MCF 10A (cell line): ENCODE measurements at regions of chr17 and their contacts with region 1.

Region 1: DNA sequence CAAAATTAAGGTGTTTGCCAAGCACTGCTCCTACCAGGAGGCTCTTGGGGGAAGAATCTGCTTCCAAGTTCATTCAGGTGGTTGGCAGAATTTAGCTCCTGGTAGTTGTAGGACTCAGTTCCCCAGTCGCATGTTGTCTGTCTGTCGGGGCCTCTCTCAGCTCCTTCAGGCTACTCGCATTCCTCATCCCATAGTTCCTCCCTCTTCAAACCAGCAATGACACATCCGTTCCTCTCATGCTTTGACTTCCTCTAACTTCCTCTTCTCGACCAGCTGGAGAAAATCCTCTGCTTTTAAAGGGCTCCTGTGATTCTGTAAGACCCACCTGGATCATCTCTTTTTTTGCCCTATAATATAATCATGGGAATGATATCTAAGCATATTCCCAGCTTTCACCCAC is 108.1 kb downstream of the PMP22 start:
- DNase-seq: peak; percentile 10
- H3K4me3 Mint-ChIP-seq: no peak overlapping the region
- H3K27ac Mint-ChIP-seq: no peak overlapping the region
- H3K4me1 Mint-ChIP-seq: peaks cover 18% of the 10 kb centered on the region
- H3K27me3 Mint-ChIP-seq: no peaks in the 10 kb centered on the region
- CTCF ChIP-seq: no peak

Region 2: DNA sequence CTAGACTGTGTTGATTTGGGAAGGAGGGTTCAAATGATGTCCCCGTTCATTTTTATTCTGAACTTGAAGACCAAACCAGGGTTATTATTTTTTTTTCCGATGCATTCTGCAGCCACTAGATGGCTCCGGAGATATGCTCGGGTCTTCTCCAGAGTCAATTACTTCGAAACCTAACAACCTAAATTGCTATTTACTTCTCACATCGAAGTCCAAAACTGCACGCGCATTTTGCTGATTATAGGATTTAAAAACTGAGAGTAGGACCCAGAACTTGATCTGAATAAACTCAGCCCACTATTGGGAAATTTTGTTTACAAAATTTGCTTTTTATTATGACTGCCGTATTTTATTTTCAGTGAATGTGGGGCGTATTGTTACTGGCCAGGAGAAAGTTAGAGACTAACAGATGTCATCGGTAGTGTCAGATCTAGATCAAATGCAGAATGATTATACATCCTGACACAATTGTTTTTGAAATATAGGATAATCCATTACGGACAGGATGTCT is 1819.1 kb before region 1 on chr17:
- CTCF ChIA-PET with region 1: interaction called, 3 read pairs
- POLR2A ChIA-PET with region 1: no interaction called
- intact Hi-C with region 1: loop called (anchors 10 kb)
- DNase-seq: peak; percentile 77
- H3K4me3 Mint-ChIP-seq: peak overlapping the region; percentile 66
- H3K27ac Mint-ChIP-seq: peak overlapping the region; percentile 23
- H3K4me1 Mint-ChIP-seq: no peaks in the 10 kb centered on the region
- H3K27me3 Mint-ChIP-seq: no peaks in the 10 kb centered on the region
- CTCF ChIP-seq: peak; percentile 79

Region 3: DNA sequence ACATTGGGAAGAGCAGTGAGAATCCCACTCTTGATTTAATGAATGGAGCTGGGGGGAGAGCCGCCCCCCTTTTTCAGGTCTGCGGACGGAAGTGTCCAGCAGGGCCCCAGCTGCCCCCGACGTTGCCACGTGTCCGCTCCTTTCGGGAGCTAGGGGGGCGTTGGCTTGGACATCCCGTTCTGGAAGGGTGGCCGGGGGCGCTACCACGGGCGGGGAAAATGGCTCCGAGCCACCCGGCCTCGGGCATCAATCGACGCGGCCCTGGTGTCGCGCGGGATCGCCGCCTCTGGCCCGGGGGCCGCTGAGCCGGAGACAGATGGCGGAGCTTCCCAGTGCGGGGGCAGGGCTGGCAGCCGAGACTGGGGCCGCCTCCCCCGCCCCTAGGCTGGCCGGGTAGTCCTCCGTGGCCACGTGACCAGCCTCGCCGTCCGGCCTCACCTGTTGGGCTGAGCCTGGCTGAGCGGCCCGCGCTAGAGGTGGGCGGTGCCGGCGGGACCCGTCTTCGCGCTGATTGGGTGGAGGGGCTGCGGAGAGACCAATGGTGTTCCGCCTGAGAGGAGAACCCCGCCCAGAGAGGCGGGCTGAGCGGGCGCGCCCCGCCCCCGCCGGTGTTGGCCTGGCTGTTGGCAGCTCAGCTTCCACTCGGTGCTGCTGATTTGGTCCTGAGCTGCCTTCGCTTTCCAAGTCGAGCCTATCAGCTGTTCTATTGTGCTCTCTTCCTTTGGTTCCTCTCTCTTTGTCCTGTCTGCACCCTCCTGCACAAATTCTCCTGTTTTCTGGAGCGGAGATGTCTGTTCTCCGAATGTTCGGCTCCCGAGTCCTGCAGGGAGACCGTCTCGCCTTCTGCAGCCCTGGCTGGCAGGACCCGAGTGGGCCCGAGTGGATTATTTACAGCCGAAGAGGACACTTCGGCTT is 847.8 kb before region 1 on chr17:
- CTCF ChIA-PET with region 1: interaction called, 4 read pairs
- POLR2A ChIA-PET with region 1: no interaction called
- intact Hi-C with region 1: loop called (anchors 5 kb)
- DNase-seq: peak; percentile 91
- H3K4me3 Mint-ChIP-seq: peak overlapping the region; percentile 72
- H3K27ac Mint-ChIP-seq: peak overlapping the region; percentile 61
- H3K4me1 Mint-ChIP-seq: peaks cover 23% of the 10 kb centered on the region
- H3K27me3 Mint-ChIP-seq: no peaks in the 10 kb centered on the region
- CTCF ChIP-seq: no peak

Region 4: DNA sequence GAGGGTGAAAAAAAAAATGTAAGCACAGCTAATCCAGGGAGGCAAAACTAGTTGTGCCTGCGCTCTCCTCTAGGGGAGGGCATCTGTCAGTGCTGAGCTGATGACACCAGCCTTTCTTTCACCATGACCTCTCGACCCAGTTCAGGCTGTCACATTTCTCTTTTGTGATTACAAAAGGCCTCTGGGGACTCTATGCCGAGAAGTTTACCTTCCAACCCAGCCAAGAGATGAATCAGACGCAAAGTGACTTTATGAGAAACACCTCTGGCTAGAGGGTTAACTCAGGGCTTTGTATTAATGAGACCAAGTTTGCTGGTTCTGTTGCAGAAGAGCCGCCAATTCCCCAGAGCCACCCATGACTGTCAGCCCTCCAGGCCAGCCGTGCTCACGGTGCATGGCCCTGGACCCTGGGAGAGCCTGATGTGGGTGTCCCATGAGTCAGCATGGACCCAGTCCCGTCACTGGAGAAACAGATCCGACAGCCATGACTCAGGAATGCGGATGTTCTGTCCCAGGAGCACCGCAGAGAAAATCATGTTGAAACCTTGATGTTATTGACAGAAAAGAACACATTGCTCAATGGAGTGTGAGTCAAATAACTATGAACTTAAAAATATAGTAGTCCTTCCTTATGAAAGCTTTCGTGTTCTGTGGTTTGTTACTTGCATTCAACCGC is 418.9 kb before region 1 on chr17:
- CTCF ChIA-PET with region 1: no interaction called
- POLR2A ChIA-PET with region 1: no interaction called
- intact Hi-C with region 1: loop called (anchors 5 kb)
- DNase-seq: peak; percentile 100
- H3K4me3 Mint-ChIP-seq: peak overlapping the region; percentile 54
- H3K27ac Mint-ChIP-seq: peak overlapping the region; percentile 85
- H3K4me1 Mint-ChIP-seq: peaks cover 30% of the 10 kb centered on the region
- H3K27me3 Mint-ChIP-seq: no peaks in the 10 kb centered on the region
- CTCF ChIP-seq: peak; percentile 36

Region 5: GRCh38 chr17:14926526-14927122 is 230.4 kb before region 1 on chr17:
- CTCF ChIA-PET with region 1: interaction called, 14 read pairs
- POLR2A ChIA-PET with region 1: no interaction called
- intact Hi-C with region 1: loop called (anchors 2 kb)
- DNase-seq: peak; percentile 83
- H3K4me3 Mint-ChIP-seq: no peak overlapping the region
- H3K27ac Mint-ChIP-seq: no peak overlapping the region
- H3K4me1 Mint-ChIP-seq: no peaks in the 10 kb centered on the region
- H3K27me3 Mint-ChIP-seq: peaks cover 14% of the 10 kb centered on the region
- CTCF ChIP-seq: peak; percentile 80

Region 6: DNA sequence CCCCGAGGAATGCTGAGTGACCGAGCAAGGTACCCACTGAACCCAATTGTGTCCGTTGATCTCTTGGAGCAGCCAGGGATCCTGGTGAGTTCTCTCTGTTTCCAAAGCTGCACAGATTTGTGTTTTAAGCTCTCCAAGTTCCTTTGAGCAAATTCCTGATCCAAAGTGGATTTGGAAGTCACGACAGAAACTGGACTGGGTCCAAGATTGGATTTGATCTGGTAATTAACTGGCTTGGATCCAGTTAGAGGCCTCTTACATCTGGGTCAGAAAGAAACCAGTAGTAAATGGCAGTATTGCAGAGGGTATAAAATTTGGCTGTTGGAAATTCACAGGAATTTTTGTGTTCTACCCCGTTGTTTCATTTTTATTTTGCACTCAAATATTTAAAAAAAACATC is 11.4 kb before region 1 on chr17:
- CTCF ChIA-PET with region 1: interaction called, 11 read pairs
- POLR2A ChIA-PET with region 1: interaction called, 4 read pairs
- intact Hi-C with region 1: no loop called
- DNase-seq: no peak
- H3K4me3 Mint-ChIP-seq: no peak overlapping the region
- H3K27ac Mint-ChIP-seq: no peak overlapping the region
- H3K4me1 Mint-ChIP-seq: no peaks in the 10 kb centered on the region
- H3K27me3 Mint-ChIP-seq: no peaks in the 10 kb centered on the region
- CTCF ChIP-seq: no peak

Region 7: GRCh38 chr17:15171167-15172047 is 14.4 kb after region 1 on chr17:
- CTCF ChIA-PET with region 1: interaction called, 29 read pairs
- POLR2A ChIA-PET with region 1: interaction called, 3 read pairs
- intact Hi-C with region 1: no loop called
- DNase-seq: peak; percentile 80
- H3K4me3 Mint-ChIP-seq: no peak overlapping the region
- H3K27ac Mint-ChIP-seq: no peak overlapping the region
- H3K4me1 Mint-ChIP-seq: peaks cover 11% of the 10 kb centered on the region
- H3K27me3 Mint-ChIP-seq: peaks cover 14% of the 10 kb centered on the region
- CTCF ChIP-seq: peak; percentile 81